ENCODE measurements at regions of chr12 and their contacts with region 1.

Region 1: GRCh38 chr12:13764748-13765147 is 216.7 kb downstream of the GRIN2B start:
- DNase-seq: no peak
- H3K4me3 ChIP-seq: no peak overlapping the region
- H3K27ac ChIP-seq: no peak overlapping the region
- H3K4me1 ChIP-seq: no peaks in the 10 kb centered on the region
- H3K27me3 ChIP-seq: peaks cover 59% of the 10 kb centered on the region
- CTCF ChIP-seq: no peak

Region 2: DNA sequence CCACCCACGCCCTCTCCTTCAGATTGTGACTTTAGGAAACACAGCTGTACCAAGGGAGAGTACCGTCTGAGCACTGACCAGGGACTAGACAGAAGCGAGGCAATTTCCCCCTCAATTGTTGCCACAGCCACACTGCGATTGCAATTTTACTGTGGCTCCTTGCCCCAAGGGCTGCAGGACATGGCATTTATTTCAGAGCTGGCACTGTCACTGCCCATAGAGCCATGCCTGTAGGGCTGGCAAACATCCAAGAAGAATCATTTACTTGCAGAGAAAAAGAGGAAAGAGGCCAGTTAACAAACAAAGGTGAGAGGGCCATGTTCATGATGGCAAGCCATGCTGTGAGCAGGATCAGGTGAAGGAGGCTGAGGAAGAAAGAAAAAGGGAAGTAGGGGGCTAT is 438.7 kb before region 1 on chr12:
- CTCF ChIA-PET with region 1: no interaction called
- POLR2A ChIA-PET with region 1: no interaction called
- intact Hi-C with region 1: no loop called
- DNase-seq: no peak
- H3K4me3 ChIP-seq: no peak overlapping the region
- H3K27ac ChIP-seq: no peak overlapping the region
- H3K4me1 ChIP-seq: no peaks in the 10 kb centered on the region
- H3K27me3 ChIP-seq: no peaks in the 10 kb centered on the region
- CTCF ChIP-seq: no peak

Region 3: GRCh38 chr12:14332482-14332881 is 567.7 kb after region 1 on chr12:
- CTCF ChIA-PET with region 1: no interaction called
- POLR2A ChIA-PET with region 1: interaction called, 10 read pairs
- intact Hi-C with region 1: no loop called
- DNase-seq: no peak
- H3K4me3 ChIP-seq: no peak overlapping the region
- H3K27ac ChIP-seq: no peak overlapping the region
- H3K4me1 ChIP-seq: peaks cover 7% of the 10 kb centered on the region; the same call in 1 of the 2 replicates
- H3K27me3 ChIP-seq: no peaks in the 10 kb centered on the region
- CTCF ChIP-seq: no peak

Region 4: DNA sequence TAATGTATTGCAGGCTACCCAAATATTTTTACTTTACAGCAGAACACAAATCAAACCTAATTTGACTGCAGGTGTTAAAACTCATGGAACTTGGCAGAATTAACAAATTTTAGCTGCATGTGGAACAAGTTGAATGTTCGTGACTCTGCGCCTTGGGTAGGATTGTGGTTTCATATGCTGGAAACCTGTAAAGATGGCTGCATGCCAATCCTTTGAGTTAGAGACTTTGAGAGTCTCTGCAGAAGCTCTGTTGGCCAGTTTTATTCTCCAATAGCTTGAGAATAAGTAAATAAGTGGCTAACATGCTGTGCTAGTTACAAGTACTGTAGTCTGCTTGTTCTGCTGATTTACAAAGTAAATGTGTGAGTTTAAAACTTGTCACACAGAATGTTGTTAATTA is 1285.9 kb after region 1 on chr12:
- CTCF ChIA-PET with region 1: no interaction called
- POLR2A ChIA-PET with region 1: no interaction called
- intact Hi-C with region 1: no loop called
- DNase-seq: no peak
- H3K4me3 ChIP-seq: no peak overlapping the region
- H3K27ac ChIP-seq: no peak overlapping the region
- H3K4me1 ChIP-seq: no peaks in the 10 kb centered on the region
- H3K27me3 ChIP-seq: no peaks in the 10 kb centered on the region
- CTCF ChIP-seq: no peak

Measured in PC-9 (cell line).